A549 (cell line): ENCODE measurements at regions of chr19 and their contacts with region 1.

Region 1: GRCh38 chr19:54179921-54180461 is 7.0 kb upstream of the TMC4 start:
- DNase-seq: peak in 1 of 2 experiments; percentile 90
- ATAC-seq: peak; percentile 88 to 93
- H3K4me3 ChIP-seq: no peak overlapping the region
- H3K27ac ChIP-seq: no peak overlapping the region
- H3K4me1 ChIP-seq: no peaks in the 10 kb centered on the region
- CTCF ChIP-seq: peak; percentile 39
- EP300 ChIP-seq: no peak
- POLR2A ChIP-seq: no peak
- RAD21 ChIP-seq: peak in 1 of 2 experiments; percentile 54; a peak in 2 of 5 replicates

Region 2: GRCh38 chr19:54231077-54231931 is 51.3 kb after region 1 on chr19:
- CTCF ChIA-PET with region 1: interaction called, 10 read pairs
- POLR2A ChIA-PET with region 1: no interaction called
- DNase-seq: peak; percentile 57 to 82
- ATAC-seq: peak; percentile 98 to 99
- H3K4me3 ChIP-seq: no peak overlapping the region
- H3K27ac ChIP-seq: no peak overlapping the region
- H3K4me1 ChIP-seq: no peaks in the 10 kb centered on the region
- CTCF ChIP-seq: peak; percentile 92
- EP300 ChIP-seq: no peak
- POLR2A ChIP-seq: no peak
- RAD21 ChIP-seq: peak; percentile 85 to 87